CD4-positive, alpha-beta T cell (primary cell): ENCODE measurements at regions of chr1 and their contacts with region 1.

Region 1: GRCh38 chr1:89022167-89022959 is at the start of gene GBP3:
- DNase-seq: peak in 4 of 14 experiments; percentile 7 to 76 (median 66)
- ATAC-seq: peak; percentile 80
- H3K4me3 ChIP-seq: peak within 1 kb of the TSS; percentile 68
- H3K4me3 Mint-ChIP-seq: peak within 1 kb of the TSS; percentile 92
- H3K27ac ChIP-seq: peak within 1 kb of the TSS; percentile 62 to 71
- H3K27ac Mint-ChIP-seq: peak within 1 kb of the TSS; percentile 92
- H3K4me1 ChIP-seq: peaks cover 31% of the 10 kb centered on the region
- H3K4me1 Mint-ChIP-seq: peaks cover 52% of the 10 kb centered on the region
- H3K27me3 ChIP-seq: no peaks in the 10 kb centered on the region
- H3K27me3 Mint-ChIP-seq: no peaks in the 10 kb centered on the region
- CTCF ChIP-seq: no peak
- total RNA-seq, gene GBP3: 17.5 to 20.7 TPM

Region 2: GRCh38 chr1:88998716-88999115 is 23.6 kb before region 1 on chr1:
- CTCF ChIA-PET with region 1: no interaction called
- POLR2A ChIA-PET with region 1: interaction called, 12 read pairs
- intact Hi-C with region 1: no loop called
- DNase-seq: peak in 4 of 14 experiments; percentile 32 to 85 (median 84)
- ATAC-seq: peak; percentile 88
- H3K4me3 ChIP-seq: no peak overlapping the region
- H3K4me3 Mint-ChIP-seq: peak overlapping the region; percentile 50
- H3K27ac ChIP-seq: no peak overlapping the region
- H3K27ac Mint-ChIP-seq: no peak overlapping the region
- H3K4me1 ChIP-seq: peaks cover 12% of the 10 kb centered on the region
- H3K4me1 Mint-ChIP-seq: peaks cover 40% of the 10 kb centered on the region
- H3K27me3 ChIP-seq: no peaks in the 10 kb centered on the region
- H3K27me3 Mint-ChIP-seq: no peaks in the 10 kb centered on the region
- CTCF ChIP-seq: peak; percentile 64

Region 3: GRCh38 chr1:89035080-89035479 is 12.7 kb after region 1 on chr1:
- CTCF ChIA-PET with region 1: interaction called, 6 read pairs
- POLR2A ChIA-PET with region 1: interaction called, 25 read pairs
- intact Hi-C with region 1: loop called in 1 of 2 experiments (anchors 2 kb)
- DNase-seq: no peak
- ATAC-seq: no peak
- H3K4me3 ChIP-seq: no peak overlapping the region
- H3K4me3 Mint-ChIP-seq: no peak overlapping the region
- H3K27ac ChIP-seq: no peak overlapping the region
- H3K27ac Mint-ChIP-seq: peak overlapping the region; percentile 28
- H3K4me1 ChIP-seq: peaks cover 25% of the 10 kb centered on the region
- H3K4me1 Mint-ChIP-seq: peaks cover 80% of the 10 kb centered on the region
- H3K27me3 ChIP-seq: no peaks in the 10 kb centered on the region
- H3K27me3 Mint-ChIP-seq: no peaks in the 10 kb centered on the region
- CTCF ChIP-seq: no peak

Region 4: GRCh38 chr1:89041119-89041641 is 18.8 kb after region 1 on chr1:
- CTCF ChIA-PET with region 1: no interaction called
- POLR2A ChIA-PET with region 1: interaction called, 4 read pairs
- intact Hi-C with region 1: loop called in 1 of 2 experiments (anchors 2 kb)
- DNase-seq: peak in 1 of 14 experiments; percentile 37
- ATAC-seq: no peak
- H3K4me3 ChIP-seq: no peak overlapping the region
- H3K4me3 Mint-ChIP-seq: no peak overlapping the region
- H3K27ac ChIP-seq: no peak overlapping the region
- H3K27ac Mint-ChIP-seq: no peak overlapping the region
- H3K4me1 ChIP-seq: peaks cover 11% of the 10 kb centered on the region
- H3K4me1 Mint-ChIP-seq: peaks cover 26% of the 10 kb centered on the region
- H3K27me3 ChIP-seq: no peaks in the 10 kb centered on the region
- H3K27me3 Mint-ChIP-seq: no peaks in the 10 kb centered on the region
- CTCF ChIP-seq: no peak

Region 5: GRCh38 chr1:89065079-89065868 is 42.9 kb after region 1 on chr1 and contains the start of gene GBP1:
- CTCF ChIA-PET with region 1: interaction called, 8 read pairs
- POLR2A ChIA-PET with region 1: interaction called, 23 read pairs
- intact Hi-C with region 1: loop called (anchors 1 to 5 kb)
- DNase-seq: peak in 4 of 14 experiments; percentile 14 to 81 (median 71)
- ATAC-seq: peak; percentile 87
- H3K4me3 ChIP-seq: peak within 1 kb of the TSS; percentile 61
- H3K4me3 Mint-ChIP-seq: peak within 1 kb of the TSS; percentile 97
- H3K27ac ChIP-seq: peak within 1 kb of the TSS; percentile 69 to 70
- H3K27ac Mint-ChIP-seq: peak within 1 kb of the TSS; percentile 93
- H3K4me1 ChIP-seq: peaks cover 13% of the 10 kb centered on the region
- H3K4me1 Mint-ChIP-seq: peaks cover 74% of the 10 kb centered on the region
- H3K27me3 ChIP-seq: no peaks in the 10 kb centered on the region
- H3K27me3 Mint-ChIP-seq: no peaks in the 10 kb centered on the region
- CTCF ChIP-seq: no peak
- total RNA-seq, gene GBP1: 15.5 to 16.5 TPM